Sciatic nerve (tissue), 2 donors: ENCODE measurements at regions of chr11 and their contacts with region 1.

Region 1: DNA sequence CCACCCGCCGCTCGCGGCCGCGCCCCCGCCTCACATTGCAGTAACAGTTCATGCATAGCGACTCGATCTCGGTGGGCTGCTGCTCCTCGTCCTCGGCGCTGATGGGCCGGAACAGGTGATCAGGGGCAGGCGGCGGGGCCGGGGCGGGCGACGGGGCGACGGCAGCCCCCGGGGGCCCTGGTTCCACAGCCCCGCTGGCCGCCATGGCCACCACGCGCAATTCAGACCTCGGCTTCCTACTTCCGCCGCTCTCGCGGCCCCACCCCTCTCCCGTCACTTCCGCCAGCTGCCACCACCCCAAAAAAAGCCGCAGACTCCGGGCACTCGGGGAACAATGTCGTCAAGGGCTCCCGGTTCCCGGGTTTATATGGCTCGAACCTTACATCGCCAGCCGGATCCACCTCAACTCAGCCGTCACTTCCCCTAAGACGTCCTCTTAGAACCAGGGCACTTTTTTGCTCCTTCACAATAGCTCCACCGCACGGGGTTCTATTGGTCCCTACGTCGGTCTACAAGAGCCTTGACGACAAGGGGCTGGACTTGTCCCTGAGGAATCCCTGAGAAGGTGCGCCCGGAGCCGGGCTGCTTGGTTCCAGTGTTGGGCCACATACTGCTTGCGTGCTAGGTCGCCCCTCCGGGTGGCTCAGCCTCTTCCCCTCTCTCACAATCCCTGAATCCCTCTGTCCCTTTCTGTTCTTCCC is at the start of gene ZPR1:
- DNase-seq: peak; percentile 90
- ATAC-seq: peak; percentile 92
- total RNA-seq, gene ZPR1: 26.7 TPM

Region 2: DNA sequence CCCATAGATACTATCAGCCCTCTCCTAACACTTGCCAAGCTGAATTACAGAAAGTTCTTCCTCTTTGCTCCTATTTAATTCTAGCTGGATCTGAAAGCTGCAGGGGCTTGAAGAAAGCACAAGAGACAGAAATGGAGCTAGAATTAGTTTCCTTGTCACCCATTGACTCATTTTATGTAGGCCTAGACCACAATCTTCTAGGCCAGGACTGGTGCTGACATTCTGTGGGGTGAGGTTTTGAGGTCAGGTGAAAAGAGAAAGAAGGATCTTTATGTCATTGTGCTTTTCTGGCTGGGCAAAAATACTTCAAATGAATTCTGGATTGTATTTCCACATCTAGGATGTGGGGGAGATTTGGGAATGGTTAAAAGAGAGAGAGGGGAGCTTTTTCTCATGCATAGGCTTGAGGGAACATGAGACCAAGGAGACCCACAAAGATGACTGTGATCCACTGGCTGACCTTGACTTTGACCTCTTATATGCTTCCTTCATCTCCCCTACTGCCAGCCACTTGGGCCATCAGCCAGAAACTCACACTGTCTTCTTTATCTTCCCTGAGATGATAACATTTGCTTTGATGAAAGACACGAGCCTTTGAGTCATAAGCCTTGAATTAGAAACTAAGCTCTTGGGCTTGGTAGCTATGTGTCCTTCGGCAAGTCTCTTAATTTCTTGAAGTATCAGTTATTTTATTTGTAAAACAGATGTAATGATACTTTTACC is 1008.8 kb before region 1 on chr11:
- intact Hi-C with region 1: no loop called
- DNase-seq: no peak
- ATAC-seq: no peak

Region 3: DNA sequence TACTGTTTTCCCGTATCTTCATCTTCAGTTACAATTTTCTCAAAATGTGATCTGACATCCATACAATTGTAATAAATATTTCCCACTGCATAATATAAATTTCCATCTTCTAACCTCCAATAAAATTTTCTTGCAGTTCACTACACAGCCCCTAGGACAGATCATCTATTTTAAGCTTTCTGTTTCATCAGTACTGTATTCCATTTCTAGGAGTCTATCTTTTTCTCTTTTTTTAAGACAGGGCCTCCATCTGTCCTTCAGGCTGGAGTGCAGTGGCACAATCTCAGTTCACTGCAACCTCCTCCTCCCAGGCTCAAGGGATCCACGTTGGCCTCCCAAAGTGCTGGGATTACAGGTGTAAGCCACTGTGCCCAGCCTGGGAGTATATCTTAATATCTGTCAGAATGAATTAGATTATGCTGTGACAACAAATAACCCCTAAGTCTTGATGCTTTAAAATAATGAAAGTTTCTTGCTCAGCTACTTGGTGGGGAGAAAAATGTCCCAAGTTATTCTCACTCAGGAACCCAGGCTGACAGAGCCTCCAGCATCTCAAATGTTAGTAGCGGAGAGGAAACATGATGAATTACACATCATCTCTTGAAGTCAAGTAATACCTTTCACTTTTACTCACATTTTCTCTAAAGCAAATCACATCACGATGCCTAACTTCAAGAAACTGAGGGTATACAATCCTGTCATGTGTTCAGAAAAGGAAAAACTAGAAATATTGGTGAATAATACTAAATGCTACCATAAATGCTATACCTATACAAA is 107.4 kb before region 1 on chr11:
- intact Hi-C with region 1: no loop called
- DNase-seq: no peak
- ATAC-seq: no peak

Region 4: DNA sequence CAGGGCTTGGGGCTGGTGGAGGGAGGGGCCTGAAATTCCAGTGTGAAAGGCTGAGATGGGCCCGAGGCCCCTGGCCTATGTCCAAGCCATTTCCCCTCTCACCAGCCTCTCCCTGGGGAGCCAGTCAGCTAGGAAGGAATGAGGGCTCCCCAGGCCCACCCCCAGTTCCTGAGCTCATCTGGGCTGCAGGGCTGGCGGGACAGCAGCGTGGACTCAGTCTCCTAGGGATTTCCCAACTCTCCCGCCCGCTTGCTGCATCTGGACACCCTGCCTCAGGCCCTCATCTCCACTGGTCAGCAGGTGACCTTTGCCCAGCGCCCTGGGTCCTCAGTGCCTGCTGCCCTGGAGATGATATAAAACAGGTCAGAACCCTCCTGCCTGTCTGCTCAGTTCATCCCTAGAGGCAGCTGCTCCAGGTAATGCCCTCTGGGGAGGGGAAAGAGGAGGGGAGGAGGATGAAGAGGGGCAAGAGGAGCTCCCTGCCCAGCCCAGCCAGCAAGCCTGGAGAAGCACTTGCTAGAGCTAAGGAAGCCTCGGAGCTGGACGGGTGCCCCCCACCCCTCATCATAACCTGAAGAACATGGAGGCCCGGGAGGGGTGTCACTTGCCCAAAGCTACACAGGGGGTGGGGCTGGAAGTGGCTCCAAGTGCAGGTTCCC is 41.7 kb after region 1 on chr11 and contains the start of gene APOC3:
- intact Hi-C with region 1: loop called (anchors 5 kb)
- DNase-seq: peak; percentile 47
- ATAC-seq: no peak
- total RNA-seq, gene APOC3: not detected

Region 5: DNA sequence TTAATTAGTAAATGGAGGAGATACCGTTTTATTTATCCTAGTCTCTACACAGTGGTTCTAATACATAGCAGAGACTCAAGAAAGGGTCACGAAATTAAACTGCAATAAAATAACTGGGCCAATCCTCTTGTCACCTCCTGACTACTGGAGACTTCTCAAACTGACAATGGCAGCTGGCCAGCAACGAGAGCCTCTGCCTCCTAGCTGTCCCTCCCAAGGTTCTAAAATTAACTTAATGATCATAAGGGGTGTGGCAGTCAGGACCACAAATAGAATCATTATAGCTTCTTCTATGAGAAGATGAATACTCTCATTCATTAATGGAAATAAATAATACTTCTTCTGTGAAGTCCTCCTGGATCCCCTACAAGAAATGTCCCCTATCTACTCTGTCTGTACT is 113.3 kb after region 1 on chr11:
- intact Hi-C with region 1: no loop called
- DNase-seq: no peak
- ATAC-seq: no peak

Region 6: DNA sequence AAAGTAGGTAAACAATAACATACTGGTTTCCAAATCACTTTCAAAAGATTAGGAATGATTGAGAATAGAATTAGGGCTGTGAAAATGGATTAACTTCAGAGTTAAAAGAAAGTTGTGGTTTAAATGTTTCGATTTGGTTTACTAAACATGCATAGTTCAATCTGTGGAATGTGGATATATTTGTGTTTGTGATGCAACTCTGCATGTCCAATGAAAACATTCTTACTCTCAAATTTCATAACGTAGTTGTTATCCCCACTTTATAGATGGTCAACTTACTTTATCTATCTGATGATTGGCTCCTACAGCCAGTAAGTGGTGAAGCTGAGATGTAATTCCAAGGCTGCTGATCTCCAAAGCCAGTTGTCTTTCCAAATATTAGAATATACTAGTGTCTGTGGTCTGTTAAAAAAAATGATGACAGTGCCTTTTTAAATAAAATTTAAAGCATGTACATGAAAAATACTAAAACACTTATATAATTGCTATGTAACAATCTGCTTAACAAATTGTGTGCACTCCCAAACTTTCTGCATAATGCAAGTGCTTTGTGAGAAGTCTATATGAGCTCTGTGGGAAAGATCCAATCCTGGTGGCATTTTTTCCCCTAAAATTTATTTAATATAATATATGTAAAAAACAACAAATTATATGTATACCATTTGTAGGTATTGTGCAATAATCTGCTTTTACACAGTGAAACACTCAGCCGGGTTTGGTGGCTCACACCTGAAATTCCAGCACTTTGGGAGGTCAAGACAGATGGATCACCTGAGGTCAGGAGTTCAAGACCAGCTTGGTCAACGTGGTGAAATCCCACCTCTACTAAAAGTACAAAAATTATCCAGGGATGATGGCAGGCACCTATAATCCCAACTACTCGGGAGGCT is 320.0 kb after region 1 on chr11:
- intact Hi-C with region 1: loop called (anchors 10 kb)
- DNase-seq: no peak
- ATAC-seq: no peak

Region 7: GRCh38 chr11:117226388-117227385 is 438.8 kb after region 1 on chr11:
- intact Hi-C with region 1: loop called (anchors 10 kb)
- DNase-seq: peak; percentile 64
- ATAC-seq: peak; percentile 57